Panc1 (cell line): ENCODE measurements at regions of chr7 and their contacts with region 1.

Region 1: DNA sequence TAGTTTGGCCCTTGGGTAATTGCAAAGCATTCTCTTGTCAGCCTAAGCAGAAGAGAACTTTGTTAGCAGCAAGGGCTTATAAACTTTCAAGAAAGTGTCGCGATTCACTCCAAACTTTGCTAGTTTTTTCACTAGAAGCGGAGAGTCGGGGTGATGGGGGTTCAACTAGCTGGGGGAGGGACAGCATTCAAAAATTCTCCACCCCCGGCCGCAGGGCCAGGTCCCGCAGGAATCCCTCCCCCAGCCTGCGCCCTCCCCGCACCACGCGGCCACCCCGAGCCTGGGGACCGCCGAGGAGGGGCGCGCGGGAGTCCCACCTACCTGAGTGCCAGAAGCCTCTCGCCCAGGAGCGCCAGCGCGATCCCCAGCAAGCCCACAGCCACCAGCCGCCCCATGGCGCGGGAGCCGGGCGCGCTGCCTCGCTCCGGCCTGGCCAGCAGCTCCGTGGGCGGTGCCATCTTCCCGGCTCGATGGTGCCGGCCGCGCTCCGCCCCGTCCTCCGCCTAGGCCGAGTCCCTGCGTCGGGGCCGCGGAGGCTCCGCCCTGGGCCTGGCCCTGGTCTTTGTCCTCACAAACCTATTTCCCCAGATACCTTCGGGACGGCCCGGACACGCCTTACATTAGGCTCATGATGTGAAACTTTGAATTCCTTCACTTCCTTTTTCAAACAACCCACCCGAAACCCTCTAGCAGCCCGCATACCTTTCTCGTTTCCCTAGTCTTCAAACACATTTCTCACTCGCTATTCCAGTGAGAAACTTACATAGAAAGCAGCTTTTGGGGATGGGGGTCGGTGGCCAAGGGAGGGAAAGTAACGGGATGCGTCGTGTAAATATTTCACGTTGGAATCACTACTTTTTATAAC is at the start of gene PON2:
- DNase-seq: peak; percentile 61
- ATAC-seq: peak; percentile 100
- H3K4me3 ChIP-seq: peak within 1 kb of the TSS; percentile 66 to 77
- H3K27ac ChIP-seq: peak within 1 kb of the TSS; percentile 97
- H3K4me1 ChIP-seq: peaks cover 5% of the 10 kb centered on the region; the same call in 1 of the 2 replicates
- H3K27me3 ChIP-seq: no peaks in the 10 kb centered on the region
- CTCF ChIP-seq: no peak; the same call in 1 of the 2 replicates
- total RNA-seq, gene PON2: 116 TPM

Region 2: GRCh38 chr7:95246831-95247370 is 187.9 kb before region 1 on chr7:
- CTCF ChIA-PET with region 1: no interaction called
- POLR2A ChIA-PET with region 1: interaction called, 24 read pairs
- in situ Hi-C with region 1: no loop called
- intact Hi-C with region 1: no loop called
- DNase-seq: peak; percentile 56
- ATAC-seq: peak; percentile 76
- H3K4me3 ChIP-seq: no peak overlapping the region
- H3K27ac ChIP-seq: no peak overlapping the region
- H3K4me1 ChIP-seq: no peaks in the 10 kb centered on the region
- H3K27me3 ChIP-seq: no peaks in the 10 kb centered on the region
- CTCF ChIP-seq: peak; percentile 74

Region 3: DNA sequence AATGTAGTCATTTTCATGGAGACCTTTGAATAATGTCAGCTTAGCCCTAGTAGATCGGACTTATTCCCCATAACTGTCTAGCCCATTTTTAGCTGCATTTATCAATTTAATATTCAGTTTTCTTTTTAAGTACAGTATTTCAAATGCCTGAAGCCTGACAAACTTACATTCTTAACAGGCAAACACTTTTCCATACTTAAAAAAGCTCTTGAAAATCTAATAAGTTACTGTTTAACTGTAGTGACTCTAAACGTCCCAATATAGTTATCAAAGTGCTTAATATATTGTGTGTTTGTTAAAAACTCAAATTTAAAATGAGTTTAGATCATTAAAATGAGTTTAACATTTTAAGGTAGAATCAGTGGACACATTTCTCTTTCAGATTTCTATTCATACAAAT is 155.4 kb before region 1 on chr7:
- CTCF ChIA-PET with region 1: no interaction called
- POLR2A ChIA-PET with region 1: no interaction called
- in situ Hi-C with region 1: no loop called
- intact Hi-C with region 1: no loop called
- DNase-seq: no peak
- ATAC-seq: no peak
- H3K4me3 ChIP-seq: no peak overlapping the region
- H3K27ac ChIP-seq: no peak overlapping the region
- H3K4me1 ChIP-seq: no peaks in the 10 kb centered on the region
- H3K27me3 ChIP-seq: no peaks in the 10 kb centered on the region
- CTCF ChIP-seq: no peak

Region 4: GRCh38 chr7:95491634-95492320 is 57.0 kb after region 1 on chr7:
- CTCF ChIA-PET with region 1: no interaction called
- POLR2A ChIA-PET with region 1: interaction called, 19 read pairs
- in situ Hi-C with region 1: no loop called
- intact Hi-C with region 1: no loop called
- DNase-seq: no peak
- ATAC-seq: no peak
- H3K4me3 ChIP-seq: no peak overlapping the region
- H3K27ac ChIP-seq: no peak overlapping the region
- H3K4me1 ChIP-seq: no peaks in the 10 kb centered on the region
- H3K27me3 ChIP-seq: no peaks in the 10 kb centered on the region
- CTCF ChIP-seq: no peak